Activated CD8-positive, alpha-beta memory T cell treated with anti-CD3 and anti-CD28 coated beads, Interleukin-2, amount 10 ng/mL, durations not matched to agents 7 days and 5 days (primary cell): ENCODE measurements at regions of chr20 and their contacts with region 1.

Region 1: GRCh38 chr20:35601008-35601973 is 14.3 kb upstream of the SPAG4 start:
- DNase-seq: peak; percentile 85
- ATAC-seq: peak; percentile 92
- H3K4me3 Mint-ChIP-seq: peak overlapping the region; percentile 57
- H3K27ac Mint-ChIP-seq: no peak overlapping the region
- H3K4me1 Mint-ChIP-seq: peaks cover 7% of the 10 kb centered on the region
- H3K27me3 Mint-ChIP-seq: peaks cover 50% of the 10 kb centered on the region

Region 2: GRCh38 chr20:35490736-35491181 is 110.5 kb before region 1 on chr20:
- CTCF ChIA-PET with region 1: no interaction called
- DNase-seq: peak; percentile 91
- ATAC-seq: peak; percentile 95
- H3K4me3 Mint-ChIP-seq: peak overlapping the region; percentile 93
- H3K27ac Mint-ChIP-seq: peak overlapping the region; percentile 99
- H3K4me1 Mint-ChIP-seq: peaks cover 46% of the 10 kb centered on the region
- H3K27me3 Mint-ChIP-seq: no peaks in the 10 kb centered on the region

Region 3: DNA sequence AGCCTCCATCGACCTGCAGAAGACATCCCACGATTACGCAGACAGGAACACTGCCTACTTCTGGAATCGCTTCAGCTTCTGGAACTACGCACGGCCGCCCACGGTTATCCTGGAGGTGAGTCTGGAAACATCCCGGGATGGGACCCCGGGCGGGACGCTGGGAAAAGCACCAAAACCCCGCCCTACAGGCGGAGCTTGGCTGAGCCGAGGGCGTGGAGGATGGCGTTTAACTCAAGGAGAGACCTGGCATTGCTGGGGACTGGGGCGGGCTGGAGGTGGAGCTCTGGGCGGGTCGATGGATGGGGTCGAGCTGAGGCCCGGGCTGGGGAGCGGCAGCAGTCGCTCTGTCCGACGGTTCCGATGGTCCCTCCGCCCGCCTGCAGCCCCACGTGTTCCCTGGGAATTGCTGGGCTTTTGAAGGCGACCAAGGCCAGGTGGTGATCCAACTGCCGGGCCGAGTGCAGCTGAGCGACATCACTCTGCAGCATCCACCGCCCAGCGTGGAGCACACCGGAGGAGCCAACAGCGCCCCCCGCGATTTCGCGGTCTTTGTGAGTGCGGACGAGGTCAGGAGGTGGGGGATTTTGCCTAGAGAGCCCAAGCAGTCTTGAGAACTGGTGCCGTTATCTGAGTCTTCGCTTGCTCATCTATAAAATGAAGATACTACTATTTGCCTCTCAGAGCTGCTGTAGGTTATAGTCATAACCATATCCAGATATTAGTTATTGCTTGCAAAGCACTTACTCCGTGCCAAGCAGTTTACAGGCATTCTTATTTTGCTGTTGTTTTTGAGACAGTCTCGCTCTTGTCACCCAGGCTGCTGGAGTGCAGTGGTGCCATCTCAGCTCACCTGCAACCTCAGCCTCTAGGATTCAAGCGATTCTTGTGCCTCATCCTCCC is 18.2 kb after region 1 on chr20:
- CTCF ChIA-PET with region 1: interaction called, 13 read pairs
- DNase-seq: peak; percentile 87
- ATAC-seq: peak; percentile 43
- H3K4me3 Mint-ChIP-seq: peak overlapping the region; percentile 85
- H3K27ac Mint-ChIP-seq: peak overlapping the region; percentile 84
- H3K4me1 Mint-ChIP-seq: peaks cover 42% of the 10 kb centered on the region
- H3K27me3 Mint-ChIP-seq: no peaks in the 10 kb centered on the region

Region 4: DNA sequence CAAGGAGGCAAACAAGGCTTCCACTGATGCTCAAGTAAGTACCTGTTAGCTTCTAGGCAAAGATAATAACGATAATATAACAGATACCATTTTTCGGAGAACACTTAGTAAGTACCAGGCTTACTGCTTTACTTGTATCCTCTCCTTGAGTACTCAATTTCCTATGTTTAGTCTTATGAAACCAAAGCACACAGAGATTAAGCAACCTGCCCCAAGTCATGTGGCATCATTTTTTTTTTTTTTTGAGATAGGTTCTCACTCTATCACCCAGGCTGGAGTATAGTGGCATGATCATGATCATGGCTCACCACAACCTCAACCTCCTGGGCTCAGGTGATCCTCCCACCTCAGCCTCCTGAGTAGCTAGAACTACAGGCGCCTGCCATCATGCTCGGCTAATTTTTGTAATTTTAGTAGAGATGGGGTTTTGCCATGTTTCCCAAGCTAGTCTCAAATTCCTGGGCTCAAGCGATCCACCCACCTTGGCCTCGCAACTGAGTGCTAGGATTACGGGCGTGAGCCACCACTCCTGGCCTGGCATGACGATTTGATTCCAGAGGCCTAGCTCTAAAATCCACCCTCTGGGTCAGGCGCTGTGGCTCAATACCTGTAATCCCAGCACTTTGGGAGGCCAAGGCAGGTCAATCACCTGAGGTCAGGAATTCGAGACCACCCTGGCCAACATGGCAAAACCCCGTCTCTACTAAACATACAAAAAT is 28.3 kb after region 1 on chr20:
- CTCF ChIA-PET with region 1: no interaction called
- DNase-seq: peak; percentile 31
- ATAC-seq: no peak
- H3K4me3 Mint-ChIP-seq: no peak overlapping the region
- H3K27ac Mint-ChIP-seq: no peak overlapping the region
- H3K4me1 Mint-ChIP-seq: peaks cover 3% of the 10 kb centered on the region
- H3K27me3 Mint-ChIP-seq: no peaks in the 10 kb centered on the region

Region 5: DNA sequence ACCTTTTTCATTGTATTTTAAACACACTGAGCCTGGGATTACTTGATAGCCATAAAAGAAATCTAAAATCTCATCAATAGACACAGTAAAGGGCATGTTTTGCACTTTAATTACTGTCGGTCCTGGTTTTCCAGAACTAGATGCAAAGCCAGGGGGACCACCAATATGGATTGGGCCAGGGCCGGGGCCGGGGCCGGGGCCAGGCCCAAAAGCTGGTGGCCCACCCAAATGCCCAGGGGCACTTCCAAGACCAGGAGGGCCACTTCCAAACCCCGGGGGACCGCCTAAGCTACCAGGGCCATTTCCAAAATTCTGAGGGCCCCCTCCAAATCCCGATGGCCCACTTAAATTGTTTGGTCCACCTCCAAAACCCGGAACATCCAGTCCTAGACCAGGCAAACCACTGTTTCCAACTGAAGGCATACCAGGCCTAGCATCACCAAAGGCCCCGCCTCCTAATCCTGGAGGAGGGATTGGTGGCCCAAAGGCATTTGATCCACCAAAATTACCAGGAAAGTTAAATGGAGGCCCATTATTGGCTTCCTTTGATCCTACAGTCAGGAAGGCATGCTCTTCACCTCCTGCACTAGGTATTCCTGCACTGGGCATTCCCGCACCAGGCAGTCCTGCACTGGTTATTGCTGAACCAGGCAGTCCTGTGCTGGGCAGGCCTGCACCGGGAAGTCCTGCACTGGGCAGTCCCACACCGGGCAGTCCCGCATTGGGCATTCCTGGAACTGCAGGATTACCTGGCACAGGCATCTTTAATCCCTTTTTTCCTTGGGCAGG is 51.5 kb after region 1 on chr20:
- CTCF ChIA-PET with region 1: no interaction called
- DNase-seq: no peak
- ATAC-seq: no peak
- H3K4me3 Mint-ChIP-seq: no peak overlapping the region
- H3K27ac Mint-ChIP-seq: no peak overlapping the region
- H3K4me1 Mint-ChIP-seq: peaks cover 31% of the 10 kb centered on the region
- H3K27me3 Mint-ChIP-seq: no peaks in the 10 kb centered on the region

Region 6: DNA sequence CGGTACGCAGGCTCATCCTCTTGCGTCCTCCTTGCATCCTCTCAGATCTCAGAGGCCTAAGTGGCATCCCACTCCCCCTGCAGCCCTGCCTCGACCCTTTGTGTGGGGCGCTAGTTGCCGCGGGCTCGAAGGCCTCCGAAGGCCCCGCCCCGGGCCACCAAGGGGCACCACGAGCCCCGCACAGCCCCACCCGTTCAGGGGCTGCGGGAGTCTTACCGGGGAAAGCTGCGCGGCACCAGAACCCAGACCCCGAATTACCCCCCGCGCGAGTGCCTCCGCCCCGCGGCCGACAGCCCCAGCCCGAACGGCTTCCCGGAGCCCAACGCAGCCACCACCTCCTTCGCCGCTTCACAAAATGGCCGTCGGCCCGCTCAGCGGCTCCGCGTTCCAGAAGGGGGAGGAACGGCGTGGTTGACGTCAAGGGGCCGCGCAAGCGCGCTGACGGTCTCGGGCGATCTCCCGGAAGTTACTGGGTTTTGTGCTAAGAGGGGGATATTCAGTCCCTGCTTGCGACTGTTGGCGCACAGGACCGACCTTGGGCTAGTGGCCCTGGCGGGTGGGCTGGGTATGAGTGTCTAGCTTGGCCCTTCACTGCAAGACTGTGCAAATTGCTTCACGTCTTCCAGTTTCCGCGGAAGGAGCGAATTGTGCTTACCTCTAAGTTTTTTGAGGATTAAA is 63.4 kb after region 1 on chr20 and contains the starts of genes CPNE1 and RBM12:
- CTCF ChIA-PET with region 1: interaction called, 13 read pairs
- DNase-seq: peak; percentile 97
- ATAC-seq: peak; percentile 80
- H3K4me3 Mint-ChIP-seq: peak within 1 kb of the TSS; percentile 96
- H3K27ac Mint-ChIP-seq: peak within 1 kb of the TSS; percentile 95
- H3K4me1 Mint-ChIP-seq: peaks cover 37% of the 10 kb centered on the region
- H3K27me3 Mint-ChIP-seq: no peaks in the 10 kb centered on the region
- total RNA-seq, gene CPNE1: 277 to 286 TPM
- total RNA-seq, gene RBM12: 101 to 137 TPM

Region 7: DNA sequence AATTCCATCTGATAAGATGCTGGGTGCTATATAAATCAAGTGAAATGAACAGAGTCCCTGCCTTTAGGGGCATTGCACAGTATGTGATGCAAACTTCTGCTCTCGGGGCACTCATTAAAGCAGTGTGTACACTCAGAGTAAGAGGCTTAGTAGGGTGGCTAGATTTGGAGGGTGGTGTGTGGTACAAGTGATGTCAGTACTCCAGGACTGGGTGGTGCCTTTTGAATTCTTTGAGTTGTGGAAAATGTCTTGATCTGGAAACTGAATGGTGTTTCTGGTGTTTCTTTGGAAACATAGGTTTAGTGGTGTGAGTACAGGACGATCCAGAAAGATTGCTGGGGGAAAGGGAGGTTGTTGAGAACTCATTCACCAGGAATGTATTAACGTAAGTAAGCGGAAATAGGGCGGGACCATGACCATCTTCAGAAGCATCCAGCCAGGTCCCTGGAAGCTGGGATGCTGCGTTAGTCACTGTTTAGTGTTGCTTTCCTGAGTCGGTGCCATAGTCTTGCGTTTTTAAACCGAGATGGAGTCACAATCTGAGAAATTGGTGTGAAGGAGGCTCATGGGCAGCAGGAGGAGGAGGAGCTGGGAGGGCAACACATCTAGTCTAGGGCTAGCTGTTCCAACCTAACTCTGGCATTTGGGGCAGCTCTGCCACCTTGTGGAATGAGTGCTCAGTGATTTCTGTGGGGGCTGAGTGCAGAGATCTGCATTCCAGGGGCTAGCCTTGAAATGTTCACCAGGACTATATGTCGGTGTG is 282.7 kb after region 1 on chr20:
- CTCF ChIA-PET with region 1: interaction called, 10 read pairs
- DNase-seq: peak; percentile 75
- ATAC-seq: peak; percentile 92
- H3K4me3 Mint-ChIP-seq: no peak overlapping the region
- H3K27ac Mint-ChIP-seq: no peak overlapping the region
- H3K4me1 Mint-ChIP-seq: peaks cover 8% of the 10 kb centered on the region
- H3K27me3 Mint-ChIP-seq: no peaks in the 10 kb centered on the region